Activated B cell treated with CpG ODN at 0.5 μM for 24 hours (primary cell): ENCODE measurements at regions of chr17 and their contacts with region 1.

Region 1: GRCh38 chr17:7204828-7205461 is 14.7 kb downstream of the DLG4 start:
- DNase-seq: peak; percentile 95
- ATAC-seq: peak; percentile 88
- H3K4me3 Mint-ChIP-seq: peak overlapping the region; percentile 87
- H3K27ac Mint-ChIP-seq: peak overlapping the region; percentile 94
- H3K4me1 Mint-ChIP-seq: peaks cover 30% of the 10 kb centered on the region
- H3K27me3 Mint-ChIP-seq: no peaks in the 10 kb centered on the region
- CTCF ChIP-seq: no peak

Region 2: GRCh38 chr17:7004398-7005253 is 200.3 kb before region 1 on chr17:
- CTCF ChIA-PET with region 1: no interaction called
- POLR2A ChIA-PET with region 1: interaction called, 13 read pairs
- intact Hi-C with region 1: no loop called
- DNase-seq: no peak
- ATAC-seq: peak; percentile 95
- H3K4me3 Mint-ChIP-seq: no peak overlapping the region
- H3K27ac Mint-ChIP-seq: peak overlapping the region; percentile 54
- H3K4me1 Mint-ChIP-seq: peaks cover 22% of the 10 kb centered on the region
- H3K27me3 Mint-ChIP-seq: no peaks in the 10 kb centered on the region
- CTCF ChIP-seq: peak; percentile 50

Region 3: GRCh38 chr17:7191571-7192270 is 13.2 kb before region 1 on chr17:
- CTCF ChIA-PET with region 1: no interaction called
- POLR2A ChIA-PET with region 1: no interaction called
- intact Hi-C with region 1: no loop called
- DNase-seq: no peak
- ATAC-seq: peak; percentile 34
- H3K4me3 Mint-ChIP-seq: no peak overlapping the region
- H3K27ac Mint-ChIP-seq: no peak overlapping the region
- H3K4me1 Mint-ChIP-seq: no peaks in the 10 kb centered on the region
- H3K27me3 Mint-ChIP-seq: no peaks in the 10 kb centered on the region
- CTCF ChIP-seq: no peak

Region 4: DNA sequence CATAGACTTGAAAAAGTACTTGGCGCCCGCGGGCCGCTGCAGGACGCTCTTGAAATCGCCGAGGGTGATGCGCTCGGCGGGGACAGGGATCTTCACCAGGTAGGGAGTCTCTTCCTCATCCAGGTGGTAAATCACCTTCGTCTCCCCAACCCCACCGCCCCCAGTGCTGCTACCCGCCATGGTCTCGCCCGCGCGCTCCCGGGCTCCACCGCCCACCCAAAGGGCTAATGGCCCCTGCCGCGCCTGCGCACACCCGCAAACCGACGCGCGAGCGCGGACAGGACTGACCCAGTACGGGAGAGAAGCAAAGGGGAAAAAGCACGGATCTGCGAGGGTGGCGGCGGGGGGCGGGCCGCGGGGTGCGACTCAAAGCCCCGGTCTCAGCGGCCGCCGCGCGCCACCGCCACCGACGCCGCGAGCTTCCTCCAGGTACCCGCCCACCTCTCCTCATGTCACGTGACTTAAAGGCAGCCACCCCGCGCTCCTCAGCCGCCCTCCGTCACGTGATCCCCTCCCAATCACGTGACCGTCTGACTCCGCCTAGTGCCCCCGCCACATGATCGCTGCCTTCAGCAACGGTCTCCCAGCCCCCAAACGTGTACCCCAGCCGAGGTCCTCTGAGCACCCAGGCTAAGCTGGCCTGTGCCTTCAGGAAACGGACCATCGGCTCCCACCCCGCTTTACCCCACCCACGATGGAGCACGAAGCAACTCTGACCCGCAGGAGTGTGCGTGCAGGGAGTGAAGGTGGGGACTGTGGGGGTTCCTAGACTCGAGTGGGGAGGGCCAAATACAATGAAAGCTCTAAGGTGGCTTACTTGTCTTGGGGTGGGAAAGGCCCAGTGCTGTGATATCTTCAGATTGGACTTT is 29.4 kb after region 1 on chr17 and contains the start of gene DVL2:
- CTCF ChIA-PET with region 1: interaction called, 3 read pairs
- POLR2A ChIA-PET with region 1: interaction called, 4 read pairs
- intact Hi-C with region 1: loop called (anchors 1 kb)
- DNase-seq: peak; percentile 93
- ATAC-seq: peak; percentile 47
- H3K4me3 Mint-ChIP-seq: peak within 1 kb of the TSS; percentile 86
- H3K27ac Mint-ChIP-seq: peak within 1 kb of the TSS; percentile 88
- H3K4me1 Mint-ChIP-seq: peaks cover 51% of the 10 kb centered on the region
- H3K27me3 Mint-ChIP-seq: no peaks in the 10 kb centered on the region
- CTCF ChIP-seq: no peak
- total RNA-seq, gene DVL2: 56.1 and 64.6 TPM in 2 replicates

Region 5: GRCh38 chr17:7538891-7539290 is 333.9 kb after region 1 on chr17:
- CTCF ChIA-PET with region 1: no interaction called
- POLR2A ChIA-PET with region 1: no interaction called
- intact Hi-C with region 1: no loop called
- DNase-seq: no peak
- ATAC-seq: no peak
- H3K4me3 Mint-ChIP-seq: no peak overlapping the region
- H3K27ac Mint-ChIP-seq: no peak overlapping the region
- H3K4me1 Mint-ChIP-seq: no peaks in the 10 kb centered on the region
- H3K27me3 Mint-ChIP-seq: no peaks in the 10 kb centered on the region
- CTCF ChIP-seq: no peak

Region 6: GRCh38 chr17:7844292-7845154 is 639.6 kb after region 1 on chr17:
- CTCF ChIA-PET with region 1: no interaction called
- POLR2A ChIA-PET with region 1: no interaction called
- intact Hi-C with region 1: loop called (anchors 1 kb)
- DNase-seq: peak; percentile 83
- ATAC-seq: peak; percentile 46
- H3K4me3 Mint-ChIP-seq: peak overlapping the region; percentile 98
- H3K27ac Mint-ChIP-seq: peak overlapping the region; percentile 100
- H3K4me1 Mint-ChIP-seq: peaks cover 50% of the 10 kb centered on the region
- H3K27me3 Mint-ChIP-seq: no peaks in the 10 kb centered on the region
- CTCF ChIP-seq: no peak